ENCODE measurements at regions of chr12 and their contacts with region 1.

Region 1: GRCh38 chr12:630656-631632 is 32.3 kb downstream of the NINJ2 start:
- DNase-seq: peak; percentile 90
- ATAC-seq: peak; percentile 75

Region 2: GRCh38 chr12:332581-333205 is 298.3 kb before region 1 on chr12:
- intact Hi-C with region 1: no loop called
- DNase-seq: no peak
- ATAC-seq: no peak

Region 3: DNA sequence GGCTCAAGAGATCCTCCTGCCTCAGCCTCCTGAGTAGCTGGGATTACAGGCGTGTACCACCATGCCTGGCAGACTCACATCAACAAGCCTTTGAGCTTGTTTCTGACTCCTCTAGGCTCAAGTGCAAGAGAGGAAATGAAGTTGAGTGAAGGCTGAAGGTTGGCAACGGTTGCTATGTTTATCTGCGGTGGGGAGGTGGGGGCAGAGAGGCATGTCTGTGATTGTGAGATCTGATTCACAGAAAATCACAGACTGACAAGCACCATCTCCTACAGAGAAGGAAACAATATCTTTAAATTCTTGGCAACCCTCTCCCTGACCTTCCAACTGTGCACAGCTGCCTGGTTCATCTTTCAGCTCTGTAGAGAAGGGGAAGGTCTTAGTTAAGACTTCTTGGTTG is 54.4 kb after region 1 on chr12:
- intact Hi-C with region 1: loop called (anchors 5 kb)
- DNase-seq: no peak
- ATAC-seq: no peak

Measured in Right ventricle myocardium inferior (tissue), 1 donor.